Heart left ventricle (tissue), 16 donors: ENCODE measurements at regions of chr4 and their contacts with region 1.

Region 1: GRCh38 chr4:8410641-8411271 is 29.8 kb downstream of the ACOX3 start:
- DNase-seq: peak; percentile 57 to 80 (median 71)
- ATAC-seq: peak; percentile 70 to 79 (median 74)
- H3K4me3 ChIP-seq: no peak overlapping the region
- H3K27ac ChIP-seq: no peak overlapping the region
- H3K4me1 ChIP-seq: peaks cover 0 to 22% (median 11%) of the 10 kb centered on the region in 12 donors
- H3K27me3 ChIP-seq: no peaks in the 10 kb centered on the region
- CTCF ChIP-seq: peak in 11 of 12 donors; percentile 9 to 61 (median 43)
- POLR2A ChIP-seq: no peak

Region 2: GRCh38 chr4:8241895-8242696 is 168.7 kb before region 1 on chr4:
- intact Hi-C with region 1: loop called in 4 of 10 experiments (anchors 1 to 2 kb)
- DNase-seq: peak; percentile 87 to 93 (median 88)
- ATAC-seq: peak; percentile 75 to 91 (median 86)
- H3K4me3 ChIP-seq: no peak overlapping the region
- H3K27ac ChIP-seq: peak overlapping the region in 7 of 12 donors; percentile 9 to 63 (median 47)
- H3K4me1 ChIP-seq: peaks cover 0 to 21% (median 15%) of the 10 kb centered on the region in 12 donors
- H3K27me3 ChIP-seq: no peaks in the 10 kb centered on the region
- CTCF ChIP-seq: peak; percentile 97 to 100 (median 98)
- POLR2A ChIP-seq: no peak

Region 3: DNA sequence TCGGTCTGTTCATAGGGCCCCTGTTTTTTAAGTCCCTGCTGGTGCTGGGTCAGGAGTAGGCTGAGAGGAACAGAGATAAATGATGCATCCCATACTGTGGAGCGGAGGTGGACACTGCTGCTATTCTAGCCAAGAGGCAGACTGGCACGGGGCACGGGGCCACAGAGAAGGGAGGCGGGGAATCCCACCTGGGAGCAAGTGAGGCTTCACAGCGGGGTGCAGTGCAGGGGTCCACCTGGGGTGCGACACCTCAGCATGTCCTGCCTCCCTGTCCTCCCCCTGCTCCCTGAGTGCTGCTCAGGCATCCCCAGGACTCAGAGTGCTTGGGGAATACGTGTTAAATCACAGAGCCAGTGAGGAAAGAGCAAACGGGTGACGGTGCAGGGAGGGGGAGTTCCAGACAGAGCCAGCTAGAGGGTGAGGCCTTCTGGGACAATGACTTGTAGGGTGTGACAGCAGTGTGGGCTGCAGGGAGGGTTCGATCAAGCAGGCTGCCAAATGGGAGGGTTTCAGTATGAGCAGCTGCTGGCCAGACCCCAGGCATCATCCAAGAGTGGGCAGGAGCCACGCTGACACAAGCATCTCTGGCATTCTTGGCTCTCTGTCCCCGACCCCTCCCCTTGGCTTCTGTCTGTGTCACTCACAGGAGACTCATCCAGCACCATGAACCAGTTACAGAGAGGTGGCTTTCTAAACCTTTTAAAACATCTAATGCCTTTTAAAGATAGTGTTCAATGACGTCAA is 154.9 kb before region 1 on chr4:
- intact Hi-C with region 1: no loop called
- DNase-seq: peak in 1 of 5 donors; percentile 59
- ATAC-seq: peak in 3 of 4 donors; percentile 48 to 75 (median 64)
- H3K4me3 ChIP-seq: no peak overlapping the region
- H3K27ac ChIP-seq: no peak overlapping the region
- H3K4me1 ChIP-seq: peaks cover 0 to 7% (median 0%) of the 10 kb centered on the region in 12 donors
- H3K27me3 ChIP-seq: no peaks in the 10 kb centered on the region
- CTCF ChIP-seq: no peak
- POLR2A ChIP-seq: no peak